Mammary epithelial cell (primary cell): ENCODE measurements at regions of chr5 and their contacts with region 1.

Region 1: GRCh38 chr5:146049014-146049703 is 56.2 kb downstream of the PLAC8L1 start:
- DNase-seq: peak; percentile 61
- H3K4me3 ChIP-seq: no peak overlapping the region
- H3K27ac ChIP-seq: no peak overlapping the region
- H3K4me1 ChIP-seq: peaks cover 20% of the 10 kb centered on the region
- H3K27me3 ChIP-seq: no peaks in the 10 kb centered on the region
- CTCF ChIP-seq: peak; percentile 75 to 78

Region 2: DNA sequence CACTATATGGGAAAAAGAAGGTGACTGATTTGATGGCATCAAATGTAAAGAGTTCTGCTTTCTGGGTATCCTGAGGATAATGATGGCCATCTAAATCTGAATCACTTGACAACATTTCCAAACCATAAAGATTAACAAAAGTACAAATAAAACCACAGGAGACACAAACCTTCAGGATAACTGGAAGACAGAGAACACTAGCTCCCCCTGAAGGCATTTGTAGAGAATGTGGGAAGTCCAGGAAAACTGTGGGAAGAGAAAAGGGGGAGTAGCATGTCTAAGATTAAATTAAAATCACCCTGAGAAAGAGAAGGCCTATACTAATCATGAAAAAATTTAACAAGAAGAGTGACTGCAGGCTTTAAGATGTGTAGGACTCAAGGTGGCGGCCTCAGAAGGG is 330.2 kb before region 1 on chr5:
- CTCF ChIA-PET with region 1: no interaction called
- dilution Hi-C with region 1: no loop called
- in situ Hi-C with region 1: loop called in 1 of 2 experiments (anchors 25 kb)
- intact Hi-C with region 1: no loop called
- DNase-seq: peak; percentile 6
- H3K4me3 ChIP-seq: no peak overlapping the region
- H3K27ac ChIP-seq: no peak overlapping the region
- H3K4me1 ChIP-seq: no peaks in the 10 kb centered on the region
- H3K27me3 ChIP-seq: no peaks in the 10 kb centered on the region
- CTCF ChIP-seq: peak in 1 of 2 donors; percentile 49

Region 3: DNA sequence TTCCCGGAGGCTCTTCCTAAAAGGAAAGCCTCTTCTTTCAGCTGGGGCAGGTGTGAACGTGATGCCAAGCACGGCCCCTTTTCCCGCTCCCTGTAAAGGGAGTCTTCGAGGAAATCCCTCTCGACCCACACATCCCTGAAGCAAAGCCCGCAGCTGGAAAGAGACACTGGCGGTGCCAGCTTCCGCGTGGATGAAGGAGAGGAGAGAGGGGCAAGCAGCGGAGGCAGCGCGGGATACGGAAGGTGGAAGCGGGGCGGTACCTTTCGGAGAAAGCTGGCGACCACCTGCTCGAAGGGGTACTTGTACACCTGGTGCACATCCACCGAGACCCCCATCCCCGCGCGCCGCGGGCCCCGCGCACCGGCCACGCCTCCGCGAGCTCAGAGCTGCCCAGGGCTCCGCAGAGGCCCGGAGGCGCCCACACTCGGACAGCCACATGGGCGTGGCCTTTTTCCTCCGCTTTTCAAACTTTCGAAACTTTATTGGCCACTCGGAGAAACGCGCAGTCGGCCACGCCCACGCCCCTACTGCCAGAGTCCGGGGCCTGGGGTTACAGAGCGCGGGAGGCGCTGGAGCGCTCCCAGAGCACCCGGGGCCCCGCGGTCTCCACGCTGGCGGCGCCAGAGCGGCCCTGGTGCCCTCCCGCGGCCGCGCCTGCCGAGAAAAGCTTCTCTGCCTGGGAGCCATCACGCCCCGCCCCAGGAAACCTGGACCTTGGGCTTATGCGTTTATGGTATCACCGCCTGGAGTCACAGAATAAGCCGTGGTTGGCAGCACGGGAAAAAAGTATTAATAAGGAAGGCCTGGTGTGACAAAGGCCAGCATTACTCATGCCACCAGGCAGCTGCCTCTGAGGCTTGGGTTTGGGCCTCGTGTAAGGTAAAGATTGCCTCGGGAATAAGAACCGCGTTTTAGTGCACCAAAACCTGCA is 214.0 kb before region 1 on chr5 and contains the start of gene PRELID2:
- CTCF ChIA-PET with region 1: no interaction called
- dilution Hi-C with region 1: loop called (anchors 25 kb)
- in situ Hi-C with region 1: no loop called
- intact Hi-C with region 1: loop called (anchors 2 kb)
- DNase-seq: peak; percentile 84
- H3K4me3 ChIP-seq: peak within 1 kb of the TSS; percentile 61 to 67 (median 67)
- H3K27ac ChIP-seq: peak within 1 kb of the TSS; percentile 40
- H3K4me1 ChIP-seq: peaks cover 10% of the 10 kb centered on the region
- H3K27me3 ChIP-seq: no peaks in the 10 kb centered on the region
- CTCF ChIP-seq: peak in 1 of 2 donors; percentile 18
- total RNA-seq, gene PRELID2: 12.1 to 15.8 TPM

Region 4: GRCh38 chr5:145917288-145917687 is 131.9 kb before region 1 on chr5:
- CTCF ChIA-PET with region 1: no interaction called
- dilution Hi-C with region 1: no loop called
- in situ Hi-C with region 1: loop called in 1 of 2 experiments (anchors 10 kb)
- intact Hi-C with region 1: loop called (anchors 5 kb)
- DNase-seq: no peak
- H3K4me3 ChIP-seq: no peak overlapping the region
- H3K27ac ChIP-seq: no peak overlapping the region
- H3K4me1 ChIP-seq: peaks cover 25% of the 10 kb centered on the region
- H3K27me3 ChIP-seq: no peaks in the 10 kb centered on the region
- CTCF ChIP-seq: no peak